ENCODE measurements at regions of chr19 and their contacts with region 1.

Region 1: GRCh38 chr19:58439576-58440554 is at the start of gene ZNF132:
- DNase-seq: peak; percentile 98 to 99
- H3K4me3 ChIP-seq: peak within 1 kb of the TSS; percentile 71 to 72
- H3K27ac ChIP-seq: peak within 1 kb of the TSS; percentile 85 to 89
- H3K4me1 ChIP-seq: peaks cover 4 to 14% of the 10 kb centered on the region in 2 donors
- H3K27me3 ChIP-seq: no peaks in the 10 kb centered on the region
- CTCF ChIP-seq: no peak
- total RNA-seq, gene ZNF132: 5.2 TPM

Region 2: GRCh38 chr19:58380722-58381466 is 59.0 kb before region 1 on chr19 and contains the start of gene ZNF837:
- intact Hi-C with region 1: loop called (anchors 1 kb)
- DNase-seq: peak; percentile 99
- H3K4me3 ChIP-seq: peak within 1 kb of the TSS; percentile 82 to 86
- H3K27ac ChIP-seq: peak within 1 kb of the TSS; percentile 84 to 91
- H3K4me1 ChIP-seq: peaks cover 8 to 24% of the 10 kb centered on the region in 2 donors
- H3K27me3 ChIP-seq: no peaks in the 10 kb centered on the region
- CTCF ChIP-seq: no peak
- total RNA-seq, gene ZNF837: not detected

Region 3: DNA sequence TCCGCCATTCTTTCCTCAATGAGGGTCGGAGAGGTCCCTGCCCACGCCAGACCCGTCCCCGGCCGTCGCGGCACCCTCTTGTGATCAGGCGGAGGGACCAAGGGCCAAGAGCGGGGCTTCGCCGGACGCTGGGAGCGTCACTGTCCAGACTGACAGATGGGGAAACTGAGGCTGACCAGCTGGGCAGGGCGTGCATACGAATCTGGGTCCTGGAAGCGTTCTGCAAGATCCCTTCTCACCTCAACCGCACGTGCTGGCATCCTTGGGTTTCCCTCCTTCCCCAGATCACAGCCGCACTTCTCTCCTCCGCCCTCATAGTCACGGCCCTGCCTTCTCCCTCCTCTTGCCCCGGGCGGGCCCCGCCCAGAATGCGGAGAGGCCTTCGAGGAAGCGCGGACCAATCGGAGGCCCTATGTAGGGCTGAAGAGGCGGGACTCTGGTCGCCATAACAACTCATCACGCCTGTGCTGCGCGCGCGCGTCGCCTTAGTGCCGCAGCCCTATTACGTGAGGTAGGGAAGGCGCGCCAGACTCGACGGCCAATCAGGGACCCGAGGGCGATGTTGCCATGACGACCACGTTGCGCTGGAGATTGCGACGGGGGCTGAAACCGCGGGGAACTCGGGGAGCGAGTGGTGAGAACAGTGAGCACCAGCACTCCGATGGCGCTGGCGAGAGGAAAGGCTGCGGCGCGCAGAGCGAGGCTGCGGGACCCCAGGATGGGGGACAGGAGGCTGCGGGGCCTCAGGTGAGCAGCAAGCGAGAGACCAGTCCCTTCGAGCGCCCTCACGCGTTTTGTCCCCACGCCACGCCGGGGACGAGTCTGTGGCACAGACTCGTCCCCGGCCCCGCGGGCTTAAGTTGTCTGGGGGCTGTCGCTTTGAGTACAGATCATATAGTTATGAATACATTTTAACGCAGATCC is 38.7 kb before region 1 on chr19:
- intact Hi-C with region 1: loop called (anchors 1 kb)
- DNase-seq: peak; percentile 99
- H3K4me3 ChIP-seq: peak overlapping the region; percentile 66 to 67
- H3K27ac ChIP-seq: no peak overlapping the region
- H3K4me1 ChIP-seq: peaks cover 7 to 10% of the 10 kb centered on the region in 2 donors
- H3K27me3 ChIP-seq: no peaks in the 10 kb centered on the region
- CTCF ChIP-seq: peak in 1 of 3 experiments; percentile 30

Region 4: DNA sequence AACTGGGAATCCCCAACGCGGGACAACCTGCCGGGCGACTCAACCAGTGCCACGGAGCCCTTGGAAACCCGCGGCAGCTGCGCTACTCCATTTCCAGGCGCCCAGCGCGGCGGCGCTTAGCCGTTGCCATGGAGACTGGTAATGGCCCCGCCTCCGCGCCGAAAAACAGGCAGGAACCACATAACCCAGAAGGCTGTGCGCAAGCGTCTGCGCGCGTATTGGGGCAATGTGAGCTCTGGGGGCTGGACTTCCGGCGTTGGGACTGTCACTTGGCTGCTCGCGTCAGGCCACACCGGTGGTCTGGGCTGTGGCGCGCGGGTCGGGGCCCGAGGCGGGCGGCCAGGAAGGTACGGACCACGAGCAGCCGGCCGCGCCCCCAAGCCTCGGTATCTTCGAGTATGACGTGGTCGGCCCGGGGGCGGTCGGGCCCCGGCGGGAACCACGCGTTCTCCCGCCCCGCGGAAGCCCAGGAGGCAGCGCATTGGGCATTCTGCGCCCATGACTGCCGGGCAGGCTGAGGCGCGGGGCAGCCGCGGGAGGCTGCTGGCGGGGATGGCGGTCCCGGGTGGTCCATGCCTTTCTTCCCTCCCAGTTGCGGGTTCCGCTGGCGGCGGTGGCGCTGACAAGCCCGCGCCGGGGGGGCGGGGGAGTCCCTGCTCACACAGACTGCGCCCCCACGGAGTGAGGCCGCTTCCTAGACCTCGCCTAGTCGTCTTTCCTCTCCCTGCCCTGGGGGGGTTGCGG is 11.7 kb after region 1 on chr19 and contains the start of gene ZNF324B:
- intact Hi-C with region 1: loop called (anchors 1 kb)
- DNase-seq: peak; percentile 89 to 98
- H3K4me3 ChIP-seq: peak within 1 kb of the TSS; percentile 68 to 82
- H3K27ac ChIP-seq: peak within 1 kb of the TSS; percentile 35 to 54
- H3K4me1 ChIP-seq: no peaks in the 10 kb centered on the region
- H3K27me3 ChIP-seq: no peaks in the 10 kb centered on the region
- CTCF ChIP-seq: no peak
- total RNA-seq, gene ZNF324B: 2.2 TPM

Region 5: DNA sequence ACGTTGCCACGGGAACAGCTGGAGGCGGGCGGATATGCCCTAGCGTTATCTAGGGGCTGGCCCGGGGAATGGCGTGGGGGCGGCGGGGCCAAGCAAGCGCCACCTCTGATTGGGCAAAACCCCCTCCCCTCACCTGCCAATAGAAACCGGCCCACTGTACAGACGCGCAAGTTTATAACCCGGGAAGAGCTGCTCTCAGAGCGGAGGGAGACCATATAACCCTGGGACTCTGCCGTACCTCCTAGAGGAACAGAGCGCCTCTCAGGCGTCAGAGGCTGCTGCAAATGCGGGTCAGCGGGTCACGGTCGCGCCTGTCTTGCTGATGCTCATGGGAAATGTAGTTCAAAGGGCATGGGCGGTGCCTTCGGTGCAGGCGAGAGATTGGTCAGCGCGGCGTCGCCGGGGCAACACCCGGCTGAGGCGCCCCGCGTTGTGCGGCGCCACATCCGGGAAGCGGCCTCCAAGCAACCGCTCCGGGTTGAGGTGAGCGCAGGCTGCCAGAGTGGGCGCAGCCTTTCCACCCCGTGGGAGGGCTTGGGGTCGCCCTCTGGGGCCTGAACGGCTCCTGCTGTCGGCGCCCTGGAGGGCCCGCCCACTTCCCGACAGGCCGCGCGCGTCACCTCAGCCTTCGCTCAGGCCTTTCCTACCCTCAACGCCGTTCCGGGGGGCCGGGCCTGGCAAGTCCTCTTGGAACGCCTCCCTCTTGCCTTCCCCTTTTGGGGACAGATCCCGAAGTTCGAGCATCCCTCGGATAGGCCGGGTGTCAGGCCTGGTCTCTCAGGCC is 36.0 kb after region 1 on chr19 and contains the start of gene ZNF446:
- intact Hi-C with region 1: loop called (anchors 1 kb)
- DNase-seq: peak; percentile 93 to 99
- H3K4me3 ChIP-seq: peak within 1 kb of the TSS; percentile 65 to 68
- H3K27ac ChIP-seq: peak within 1 kb of the TSS; percentile 84 to 93
- H3K4me1 ChIP-seq: peaks cover 3 to 15% of the 10 kb centered on the region in 2 donors
- H3K27me3 ChIP-seq: no peaks in the 10 kb centered on the region
- CTCF ChIP-seq: no peak
- total RNA-seq, gene ZNF446: 42.7 TPM

Region 6: GRCh38 chr19:58558623-58559274 is 118.9 kb after region 1 on chr19:
- intact Hi-C with region 1: loop called (anchors 1 kb)
- DNase-seq: peak; percentile 92 to 99
- H3K4me3 ChIP-seq: peak overlapping the region; percentile 67 to 75
- H3K27ac ChIP-seq: peak overlapping the region; percentile 98 to 99
- H3K4me1 ChIP-seq: peaks cover 28 to 54% of the 10 kb centered on the region in 2 donors
- H3K27me3 ChIP-seq: no peaks in the 10 kb centered on the region
- CTCF ChIP-seq: no peak

Measured in ascending aorta (tissue), 2 donors.